ENCODE measurements at regions of chr3 and their contacts with region 1.

Region 1: DNA sequence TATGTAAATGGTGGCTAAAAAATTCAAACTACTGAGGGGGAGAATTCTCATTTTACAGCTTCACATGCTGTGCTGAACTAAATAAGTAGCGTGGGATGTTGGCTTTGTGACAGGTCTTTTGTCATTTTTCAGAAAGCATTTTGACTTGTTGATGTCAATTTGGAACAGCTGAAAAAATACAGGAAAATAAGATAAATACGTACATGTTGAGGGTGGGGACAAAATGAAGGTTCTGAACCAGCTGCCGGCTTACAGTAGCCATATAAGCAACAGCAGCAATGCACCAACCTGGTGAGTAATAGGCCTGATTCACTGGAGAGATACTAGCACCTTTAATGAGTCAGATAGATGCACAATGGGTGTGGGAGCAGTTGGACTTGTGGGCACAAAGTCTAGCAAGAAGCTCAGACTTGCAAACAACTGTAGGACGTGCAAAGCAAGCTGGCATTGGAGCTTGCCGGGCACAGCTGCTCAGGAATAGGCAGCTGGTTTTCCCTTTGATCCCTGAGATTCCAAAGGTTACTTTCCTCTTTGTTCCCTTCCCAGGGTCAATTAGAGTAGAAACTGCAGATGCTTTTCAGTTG is 12.9 kb downstream of the B3GNT5 start:
- DNase-seq: peak; percentile 73 to 99
- H3K4me3 ChIP-seq: no peak overlapping the region; the same call in 1 of the 2 replicates
- H3K27ac ChIP-seq: peak overlapping the region; percentile 85
- H3K4me1 ChIP-seq: peaks cover 65% of the 10 kb centered on the region
- H3K27me3 ChIP-seq: no peaks in the 10 kb centered on the region
- CTCF ChIP-seq: no peak

Region 2: GRCh38 chr3:185009650-185010049 is 1743.7 kb after region 1 on chr3:
- CTCF ChIA-PET with region 1: no interaction called
- POLR2A ChIA-PET with region 1: interaction called, 27 read pairs
- intact Hi-C with region 1: no loop called
- DNase-seq: no peak
- H3K4me3 ChIP-seq: no peak overlapping the region
- H3K27ac ChIP-seq: no peak overlapping the region
- H3K4me1 ChIP-seq: no peaks in the 10 kb centered on the region
- H3K27me3 ChIP-seq: no peaks in the 10 kb centered on the region
- CTCF ChIP-seq: no peak